Right ventricle myocardium inferior (tissue), 1 donor: ENCODE measurements at regions of chr1 and their contacts with region 1.

Region 1: DNA sequence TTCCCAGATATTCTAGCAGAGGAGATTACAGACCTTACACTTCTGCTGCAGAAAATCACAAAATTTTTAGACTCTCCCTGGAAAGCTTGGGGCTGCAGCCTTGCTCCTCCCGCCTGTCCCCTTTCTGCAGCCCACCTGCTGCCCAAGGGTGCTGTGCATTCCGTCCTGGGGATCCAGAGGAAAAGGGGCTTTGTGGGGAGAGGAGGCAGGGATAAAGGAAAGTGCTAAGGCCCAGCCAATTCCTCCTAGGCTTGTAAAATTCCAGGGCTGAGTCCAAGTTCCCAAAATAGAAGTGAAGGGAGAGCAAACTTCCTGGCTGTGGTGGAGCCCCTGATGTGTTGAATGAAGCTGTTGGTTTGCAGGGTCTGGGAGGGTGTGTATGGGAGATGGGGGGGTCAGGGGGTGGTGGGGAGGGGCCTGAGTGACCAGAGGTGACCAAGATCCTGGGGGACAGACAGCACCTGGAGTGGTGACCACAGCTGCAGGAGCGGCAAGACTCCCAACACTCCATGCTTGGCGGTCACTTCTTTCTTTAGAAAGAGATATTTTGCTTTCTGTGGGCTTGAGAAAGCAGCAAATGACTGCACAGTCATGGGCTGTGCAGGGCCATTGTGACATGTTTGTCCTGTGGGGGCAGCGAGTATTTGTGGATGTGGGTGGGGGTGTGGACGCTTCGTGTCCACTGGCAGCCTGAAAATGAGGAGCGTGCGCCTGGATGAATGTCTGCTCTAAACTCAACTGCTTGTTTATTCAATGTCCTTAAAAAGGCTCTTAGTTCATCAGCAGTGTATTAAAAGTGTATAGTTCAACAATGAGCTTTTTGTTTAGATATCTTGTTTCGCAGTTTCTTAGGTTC is 68.4 kb downstream of the TLR5 start:
- DNase-seq: no peak
- ATAC-seq: peak; percentile 51

Region 2: DNA sequence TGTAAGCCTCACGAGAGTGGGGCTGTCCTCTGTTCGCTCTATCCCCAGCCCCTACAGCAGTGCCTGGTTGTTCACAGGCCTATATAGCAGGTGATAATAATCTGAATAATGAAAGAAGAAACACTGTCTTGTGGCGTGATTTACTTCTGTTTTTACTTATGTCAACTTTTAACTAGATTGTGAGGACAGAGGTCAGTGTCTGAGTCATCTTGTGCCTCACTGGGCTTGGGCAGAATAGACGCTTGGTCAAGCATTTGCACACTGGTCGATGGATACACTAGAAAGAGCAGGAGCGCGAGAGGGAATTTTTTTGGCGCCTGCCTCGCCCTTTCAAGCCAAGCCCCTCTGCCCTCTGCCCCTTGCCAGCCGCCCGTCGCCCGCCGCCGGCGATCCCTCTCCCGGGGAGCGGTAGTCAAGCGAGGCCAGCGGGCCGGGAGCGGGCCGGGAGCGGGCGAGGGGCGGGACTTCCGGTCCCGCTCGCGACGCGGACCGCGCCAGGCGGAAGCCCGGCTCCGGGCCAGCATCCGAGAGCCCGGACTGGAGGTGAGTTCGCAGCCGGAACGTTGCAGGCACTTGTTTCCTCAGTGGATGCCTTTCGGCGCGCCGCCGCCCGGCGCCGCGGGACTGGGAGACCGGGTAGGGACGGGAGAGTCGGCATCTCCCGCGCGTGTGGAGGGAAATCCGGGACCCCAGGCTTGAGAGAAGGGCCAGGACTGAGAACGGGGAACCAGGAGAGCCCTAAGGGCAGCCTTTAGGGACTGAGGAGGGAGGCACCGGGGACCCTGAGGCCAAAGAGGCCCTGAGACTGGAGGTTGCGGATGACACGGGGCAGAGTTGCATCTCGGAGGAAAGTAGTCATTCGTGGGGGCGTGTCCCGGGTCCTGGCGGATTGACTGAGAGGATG is 259.9 kb before region 1 on chr1 and contains the start of gene DISP1:
- intact Hi-C with region 1: loop called (anchors 5 kb)
- DNase-seq: peak; percentile 91
- ATAC-seq: peak; percentile 97
- total RNA-seq, gene DISP1: 7.2 TPM

Region 3: GRCh38 chr1:223022641-223023473 is 51.8 kb before region 1 on chr1:
- intact Hi-C with region 1: loop called (anchors 2 kb)
- DNase-seq: no peak
- ATAC-seq: peak; percentile 60

Region 4: GRCh38 chr1:223102797-223103533 is 28.3 kb after region 1 on chr1:
- intact Hi-C with region 1: no loop called
- DNase-seq: no peak
- ATAC-seq: peak; percentile 57